PC-3 (cell line): ENCODE measurements at regions of chr5 and their contacts with region 1.

Region 1: DNA sequence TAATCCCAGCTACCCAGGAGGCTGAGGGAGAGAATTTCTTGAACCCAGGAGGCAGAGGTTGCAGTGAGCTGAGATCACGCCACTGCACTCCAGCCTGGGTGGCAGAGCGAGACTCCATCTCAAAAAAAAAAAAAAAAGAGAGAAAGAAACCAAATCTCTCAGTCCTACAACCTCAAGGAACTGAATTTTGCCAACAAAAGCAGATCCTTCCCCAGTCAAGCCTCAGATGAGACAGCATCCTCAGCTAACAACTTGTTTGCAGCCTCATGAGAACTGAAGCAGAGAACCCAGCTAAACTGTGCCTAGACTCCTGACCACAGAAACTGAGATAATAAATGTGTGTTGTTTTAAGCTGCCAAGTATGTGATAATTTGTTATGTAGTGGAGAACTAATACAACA is 7.5 kb upstream of the IL6ST start:
- DNase-seq: no peak
- ATAC-seq: no peak
- H3K4me3 ChIP-seq: no peak overlapping the region
- H3K27ac ChIP-seq: no peak overlapping the region
- H3K4me1 ChIP-seq: peaks cover 19% of the 10 kb centered on the region
- H3K27me3 ChIP-seq: no peaks in the 10 kb centered on the region
- CTCF ChIP-seq: no peak

Region 2: GRCh38 chr5:56112526-56113121 is 110.3 kb after region 1 on chr5:
- CTCF ChIA-PET with region 1: no interaction called
- POLR2A ChIA-PET with region 1: interaction called, 18 read pairs
- intact Hi-C with region 1: no loop called
- DNase-seq: peak; percentile 14
- ATAC-seq: no peak
- H3K4me3 ChIP-seq: no peak overlapping the region
- H3K27ac ChIP-seq: no peak overlapping the region
- H3K4me1 ChIP-seq: no peaks in the 10 kb centered on the region
- H3K27me3 ChIP-seq: no peaks in the 10 kb centered on the region
- CTCF ChIP-seq: no peak